GM12878 (cell line): ENCODE measurements at regions of chr5 and their contacts with region 1.

Region 1: DNA sequence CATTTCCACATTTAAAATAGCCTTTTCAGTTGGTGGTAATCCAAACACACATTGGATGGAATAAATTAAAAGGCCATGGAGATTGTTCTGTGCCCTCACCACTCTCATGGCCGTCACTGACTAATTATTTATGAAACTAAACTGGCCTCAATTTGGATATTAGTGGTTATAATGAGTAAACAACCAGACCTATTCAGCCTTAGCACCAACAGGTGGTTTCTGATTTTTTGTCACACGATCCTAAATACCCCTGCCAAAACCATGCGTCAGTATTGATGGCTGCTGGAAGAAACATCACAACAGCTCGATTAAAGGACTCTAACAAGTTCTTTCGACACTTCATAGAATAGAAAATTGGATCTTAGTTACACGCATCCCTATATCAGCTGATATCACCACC is 276.0 kb upstream of the DAP start:
- DNase-seq: no peak
- ATAC-seq: peak; percentile 83
- H3K4me3 ChIP-seq: no peak overlapping the region
- H3K27ac ChIP-seq: no peak overlapping the region
- H3K4me1 ChIP-seq: no peaks in the 10 kb centered on the region
- H3K27me3 ChIP-seq: no peaks in the 10 kb centered on the region
- CTCF ChIP-seq: no peak
- EP300 ChIP-seq: no peak
- POLR2A ChIP-seq: no peak
- RAD21 ChIP-seq: no peak

Region 2: GRCh38 chr5:11023945-11024344 is 13.1 kb before region 1 on chr5:
- CTCF ChIA-PET with region 1: interaction called, 4 read pairs
- POLR2A ChIA-PET with region 1: interaction called, 7 read pairs
- RAD21 ChIA-PET with region 1: interaction called, 5 read pairs
- SMC1A ChIA-PET with region 1: interaction called, 15 read pairs
- in situ Hi-C with region 1: no loop called
- intact Hi-C with region 1: no loop called
- DNase-seq: no peak
- ATAC-seq: no peak
- H3K4me3 ChIP-seq: no peak overlapping the region
- H3K27ac ChIP-seq: no peak overlapping the region
- H3K4me1 ChIP-seq: no peaks in the 10 kb centered on the region
- H3K27me3 ChIP-seq: no peaks in the 10 kb centered on the region
- CTCF ChIP-seq: no peak
- EP300 ChIP-seq: no peak
- POLR2A ChIP-seq: no peak
- RAD21 ChIP-seq: no peak

Region 3: DNA sequence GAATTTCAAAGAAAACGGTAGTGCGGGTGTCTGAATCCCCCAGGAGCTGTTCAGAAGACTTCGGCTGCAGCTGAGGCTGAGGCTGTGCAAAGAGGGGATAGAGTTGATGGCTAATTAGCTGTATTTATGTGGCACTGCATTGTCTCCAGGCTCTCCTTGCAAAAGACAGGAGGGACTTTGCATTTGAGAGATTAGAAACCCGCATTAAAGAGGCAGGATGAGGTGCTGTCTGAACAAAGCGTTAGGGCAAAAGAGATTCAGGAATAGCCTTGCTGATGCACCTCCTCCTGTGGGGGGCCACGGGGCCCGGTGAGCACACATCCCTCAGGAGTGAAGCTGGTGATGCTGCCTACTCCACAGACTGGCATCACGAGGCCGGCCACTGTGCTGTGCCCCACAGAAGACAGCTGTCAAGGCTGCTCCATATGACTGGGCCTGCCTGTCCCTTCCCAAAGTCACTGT is 67.6 kb after region 1 on chr5:
- CTCF ChIA-PET with region 1: no interaction called
- POLR2A ChIA-PET with region 1: no interaction called
- RAD21 ChIA-PET with region 1: no interaction called
- SMC1A ChIA-PET with region 1: no interaction called
- in situ Hi-C with region 1: no loop called
- intact Hi-C with region 1: no loop called
- DNase-seq: no peak
- ATAC-seq: no peak
- H3K4me3 ChIP-seq: no peak overlapping the region
- H3K27ac ChIP-seq: no peak overlapping the region
- H3K4me1 ChIP-seq: no peaks in the 10 kb centered on the region
- H3K27me3 ChIP-seq: 0 out of 4 replicates have a peak, but pooled peaks cover 0 to 2% of the 10 kb centered on the region in 2 experiments
- CTCF ChIP-seq: no peak
- EP300 ChIP-seq: no peak
- POLR2A ChIP-seq: no peak
- RAD21 ChIP-seq: no peak